ENCODE measurements at regions of chr6 and their contacts with region 1.

Region 1: DNA sequence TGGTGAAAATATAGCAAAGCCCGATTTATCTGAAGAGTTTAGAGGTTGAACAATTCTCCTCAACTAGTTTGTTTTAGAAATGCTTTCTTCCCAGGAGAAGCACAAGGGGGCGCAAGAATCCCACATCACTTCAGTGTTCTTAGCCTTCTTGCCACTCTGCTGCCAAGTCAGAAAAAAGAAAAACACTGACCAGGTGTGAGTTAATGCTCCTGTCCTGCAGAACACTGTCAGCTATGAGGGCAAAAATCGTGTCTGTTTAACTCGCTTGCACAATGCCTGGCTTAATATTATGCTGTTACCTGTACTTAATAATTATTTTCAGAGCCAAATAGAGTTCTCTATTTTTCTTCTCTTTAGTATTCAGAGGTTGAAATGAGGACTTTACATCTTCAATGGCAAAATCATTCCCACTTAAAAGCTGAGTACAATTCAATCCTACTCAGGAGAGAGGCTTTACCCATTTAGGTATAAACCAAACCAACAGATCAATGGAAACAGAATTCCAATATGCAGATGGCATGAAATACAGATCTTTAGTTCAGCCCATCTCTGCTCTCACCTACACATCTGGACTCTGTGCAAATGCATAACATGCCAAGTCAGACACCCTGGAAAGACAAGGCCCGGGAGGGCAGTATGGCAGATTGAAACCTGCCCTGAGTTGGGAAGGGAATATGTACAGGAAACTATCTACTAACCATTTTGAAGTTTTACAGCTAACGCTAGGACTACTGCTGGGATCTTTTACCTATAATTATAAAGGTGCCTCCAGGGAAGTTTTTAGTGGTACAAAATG is 71.4 kb upstream of the TULP1 start:
- DNase-seq: peak; percentile 86
- ATAC-seq: peak; percentile 73
- H3K4me3 Mint-ChIP-seq: no peak overlapping the region
- H3K27ac Mint-ChIP-seq: no peak overlapping the region
- H3K4me1 Mint-ChIP-seq: peaks cover 61% of the 10 kb centered on the region
- H3K27me3 Mint-ChIP-seq: no peaks in the 10 kb centered on the region

Region 2: DNA sequence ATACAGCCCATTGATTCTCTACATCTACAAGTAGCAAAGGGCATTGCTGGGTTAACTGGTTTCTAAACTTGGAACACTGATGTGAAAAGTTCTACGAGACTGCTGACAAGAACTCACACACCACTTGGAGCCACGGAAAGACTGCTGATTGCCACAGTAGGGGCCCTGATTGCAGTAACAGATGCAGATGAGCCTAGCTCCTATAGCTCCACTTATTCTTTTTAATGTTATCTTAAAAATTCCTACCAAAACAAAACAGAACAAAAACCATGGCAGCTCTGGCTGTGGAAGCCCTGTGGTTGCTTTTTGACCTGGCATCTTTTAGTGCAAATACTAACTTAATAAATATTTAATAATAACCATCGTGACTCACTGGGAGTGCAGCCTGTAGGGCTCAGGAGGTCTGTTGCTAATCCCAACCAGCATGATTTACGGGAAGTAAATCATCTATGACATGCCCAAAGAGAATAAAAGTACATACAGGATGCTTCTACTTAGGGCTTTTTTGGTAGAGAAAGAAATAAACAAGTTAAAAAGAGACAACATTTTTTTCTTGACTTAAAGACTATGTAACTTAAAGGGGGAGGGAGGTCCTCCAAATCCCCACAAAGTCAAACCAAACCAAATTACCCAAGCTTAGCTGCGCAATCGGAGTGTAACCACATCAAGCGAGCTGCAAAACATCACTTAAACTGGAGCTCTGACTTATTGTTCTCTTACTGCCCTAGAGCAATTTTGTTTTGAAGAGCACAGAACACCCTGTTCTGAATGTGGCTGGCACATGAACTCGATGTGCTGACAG is 17.4 kb after region 1 on chr6:
- CTCF ChIA-PET with region 1: interaction called, 13 read pairs
- POLR2A ChIA-PET with region 1: no interaction called
- intact Hi-C with region 1: no loop called
- DNase-seq: peak; percentile 68
- ATAC-seq: peak; percentile 80
- H3K4me3 Mint-ChIP-seq: peak overlapping the region; percentile 47
- H3K27ac Mint-ChIP-seq: peak overlapping the region; percentile 80
- H3K4me1 Mint-ChIP-seq: peaks cover 76% of the 10 kb centered on the region
- H3K27me3 Mint-ChIP-seq: no peaks in the 10 kb centered on the region

Region 3: GRCh38 chr6:35642471-35643161 is 58.5 kb after region 1 on chr6:
- CTCF ChIA-PET with region 1: interaction called, 13 read pairs
- POLR2A ChIA-PET with region 1: no interaction called
- intact Hi-C with region 1: no loop called
- DNase-seq: no peak
- ATAC-seq: peak; percentile 47
- H3K4me3 Mint-ChIP-seq: no peak overlapping the region
- H3K27ac Mint-ChIP-seq: peak overlapping the region; percentile 21
- H3K4me1 Mint-ChIP-seq: peaks cover 67% of the 10 kb centered on the region
- H3K27me3 Mint-ChIP-seq: no peaks in the 10 kb centered on the region

Region 4: GRCh38 chr6:35737413-35738211 is 153.5 kb after region 1 on chr6:
- CTCF ChIA-PET with region 1: interaction called, 178 read pairs
- POLR2A ChIA-PET with region 1: interaction called, 4 read pairs
- intact Hi-C with region 1: loop called (anchors 1 kb)
- DNase-seq: no peak
- ATAC-seq: peak; percentile 76
- H3K4me3 Mint-ChIP-seq: peak overlapping the region; percentile 56
- H3K27ac Mint-ChIP-seq: peak overlapping the region; percentile 83
- H3K4me1 Mint-ChIP-seq: peaks cover 47% of the 10 kb centered on the region
- H3K27me3 Mint-ChIP-seq: no peaks in the 10 kb centered on the region